ENCODE measurements at regions of chr10 and their contacts with region 1.

Region 1: GRCh38 chr10:21265621-21266020 is 259.9 kb downstream of the SKIDA1 start:
- DNase-seq: no peak
- H3K4me3 ChIP-seq: no peak overlapping the region
- H3K27ac ChIP-seq: no peak overlapping the region
- H3K4me1 ChIP-seq: peaks cover 0 to 3% of the 10 kb centered on the region in 2 donors
- H3K27me3 ChIP-seq: no peaks in the 10 kb centered on the region
- CTCF ChIP-seq: no peak
- POLR2A ChIP-seq: no peak

Region 2: DNA sequence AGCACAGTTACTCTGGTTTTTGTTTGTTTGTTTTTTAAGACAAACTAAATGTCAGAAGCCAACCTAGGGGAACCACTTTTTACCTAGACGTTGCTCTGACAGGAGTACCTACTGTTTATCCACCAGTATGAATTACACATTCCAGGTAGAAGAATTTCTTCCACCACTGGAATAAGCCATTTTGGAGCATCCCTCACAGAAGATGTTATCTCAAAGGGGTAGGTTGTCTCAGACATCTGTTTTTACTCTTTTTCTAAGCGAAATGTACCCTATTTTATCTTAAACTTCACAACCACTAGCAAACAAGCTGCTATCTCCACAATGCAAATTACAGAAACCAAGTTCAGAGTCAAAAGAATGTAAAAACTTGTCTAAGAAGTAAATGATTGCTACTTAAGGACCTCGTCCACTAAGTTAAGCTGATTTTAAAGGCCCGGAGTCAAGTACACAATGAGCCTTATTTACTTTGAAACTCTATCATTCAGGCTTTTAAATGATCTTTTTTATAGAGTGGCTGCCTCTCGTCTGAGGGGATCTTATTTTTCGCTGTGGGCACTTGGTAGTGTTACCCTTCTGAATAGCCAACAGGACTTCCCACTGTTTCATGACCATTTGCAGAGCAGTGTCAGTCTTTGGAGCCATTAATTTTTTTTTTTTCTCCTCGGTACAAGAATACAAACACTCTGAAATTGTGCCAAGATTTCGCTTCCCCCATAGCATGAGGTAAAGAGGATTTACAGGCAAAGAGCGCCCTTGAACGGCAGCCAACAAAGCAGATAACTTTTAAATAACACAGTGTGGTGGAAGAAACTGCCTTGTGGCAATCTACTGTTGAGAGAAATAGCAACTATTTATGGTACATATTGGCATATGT is 1646.5 kb after region 1 on chr10:
- intact Hi-C with region 1: loop called (anchors 10 kb)
- DNase-seq: no peak
- H3K4me3 ChIP-seq: no peak overlapping the region
- H3K27ac ChIP-seq: no peak overlapping the region
- H3K4me1 ChIP-seq: no peaks in the 10 kb centered on the region
- H3K27me3 ChIP-seq: no peaks in the 10 kb centered on the region
- CTCF ChIP-seq: no peak
- POLR2A ChIP-seq: no peak

Measured in breast epithelium (tissue), 4 donors.